IMR-90 (cell line): ENCODE measurements at regions of chr6 and their contacts with region 1.

Region 1: DNA sequence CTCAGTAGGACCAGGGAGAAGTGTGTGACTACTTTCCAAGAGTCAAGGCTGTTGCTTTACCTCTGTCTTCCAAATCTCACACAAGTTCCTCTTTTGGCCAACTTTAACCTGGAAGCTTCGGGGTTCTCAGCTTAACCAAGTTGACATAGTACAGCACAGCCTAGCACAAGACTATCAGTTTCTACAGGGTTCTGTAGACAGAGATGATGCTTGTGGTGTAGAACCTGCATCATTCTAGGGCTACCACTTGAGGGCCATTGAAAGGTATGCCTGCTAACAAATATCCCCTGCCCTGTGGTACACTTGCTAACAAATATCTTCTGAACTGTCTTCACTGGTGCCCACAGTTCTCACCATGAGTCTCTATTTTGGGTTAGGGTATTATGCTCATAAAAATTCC is 62.0 kb upstream of the MAP3K7 start:
- DNase-seq: no peak
- ATAC-seq: no peak
- H3K4me3 ChIP-seq: no peak overlapping the region
- H3K27ac ChIP-seq: no peak overlapping the region
- H3K4me1 ChIP-seq: no peaks in the 10 kb centered on the region
- H3K27me3 ChIP-seq: no peaks in the 10 kb centered on the region
- CTCF ChIP-seq: no peak
- POLR2A ChIP-seq: no peak
- RAD21 ChIP-seq: no peak

Region 2: DNA sequence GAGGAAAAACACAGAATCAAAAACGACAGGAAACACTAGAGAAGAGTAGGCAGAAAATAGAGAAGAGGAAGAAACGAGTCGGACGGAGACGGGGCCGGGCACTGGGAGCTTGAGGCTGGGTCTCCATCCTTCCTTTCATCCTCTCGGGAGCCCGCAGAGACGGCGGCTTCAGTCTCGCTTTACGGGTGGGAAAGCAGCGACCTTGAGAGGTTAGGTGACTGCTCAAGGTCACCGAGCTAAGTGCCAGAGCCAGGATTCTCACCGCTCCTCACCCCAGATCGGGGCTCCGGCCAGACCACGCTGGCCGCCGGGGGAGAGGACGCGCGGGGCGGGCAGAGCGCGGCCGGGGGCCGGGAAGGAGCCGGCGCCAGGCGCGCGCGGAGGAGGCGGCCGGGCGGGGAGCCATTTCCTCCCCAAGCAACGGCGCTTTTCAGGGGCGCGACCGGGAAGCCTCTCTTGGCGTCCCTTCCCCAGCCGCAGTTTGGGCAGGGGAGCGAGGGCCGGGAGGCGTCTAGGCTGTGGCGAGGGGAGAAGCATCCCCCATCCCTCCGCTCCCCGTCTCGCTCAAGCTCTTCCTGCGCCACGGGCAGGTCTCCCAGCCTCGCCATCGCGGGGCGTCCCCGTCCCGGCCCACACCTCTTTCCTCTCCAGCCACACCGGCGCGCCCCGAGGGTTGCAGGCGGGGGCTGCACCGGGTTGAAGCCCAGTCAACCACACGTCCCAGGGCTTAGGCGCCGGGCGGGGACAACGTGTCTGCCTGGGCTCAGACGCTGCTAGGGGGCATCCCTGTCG is 37.9 kb before region 1 on chr6:
- CTCF ChIA-PET with region 1: no interaction called
- POLR2A ChIA-PET with region 1: no interaction called
- dilution Hi-C with region 1: no loop called
- in situ Hi-C with region 1: no loop called
- intact Hi-C with region 1: loop called (anchors 1 kb)
- DNase-seq: peak; percentile 4
- ATAC-seq: peak; percentile 80
- H3K4me3 ChIP-seq: peak overlapping the region; percentile 68
- H3K27ac ChIP-seq: no peak overlapping the region
- H3K4me1 ChIP-seq: peaks cover 5% of the 10 kb centered on the region
- H3K27me3 ChIP-seq: peaks cover 31% of the 10 kb centered on the region
- CTCF ChIP-seq: no peak
- POLR2A ChIP-seq: no peak
- RAD21 ChIP-seq: no peak